Sigmoid colon (tissue), 7 donors: ENCODE measurements at regions of chr17 and their contacts with region 1.

Region 1: DNA sequence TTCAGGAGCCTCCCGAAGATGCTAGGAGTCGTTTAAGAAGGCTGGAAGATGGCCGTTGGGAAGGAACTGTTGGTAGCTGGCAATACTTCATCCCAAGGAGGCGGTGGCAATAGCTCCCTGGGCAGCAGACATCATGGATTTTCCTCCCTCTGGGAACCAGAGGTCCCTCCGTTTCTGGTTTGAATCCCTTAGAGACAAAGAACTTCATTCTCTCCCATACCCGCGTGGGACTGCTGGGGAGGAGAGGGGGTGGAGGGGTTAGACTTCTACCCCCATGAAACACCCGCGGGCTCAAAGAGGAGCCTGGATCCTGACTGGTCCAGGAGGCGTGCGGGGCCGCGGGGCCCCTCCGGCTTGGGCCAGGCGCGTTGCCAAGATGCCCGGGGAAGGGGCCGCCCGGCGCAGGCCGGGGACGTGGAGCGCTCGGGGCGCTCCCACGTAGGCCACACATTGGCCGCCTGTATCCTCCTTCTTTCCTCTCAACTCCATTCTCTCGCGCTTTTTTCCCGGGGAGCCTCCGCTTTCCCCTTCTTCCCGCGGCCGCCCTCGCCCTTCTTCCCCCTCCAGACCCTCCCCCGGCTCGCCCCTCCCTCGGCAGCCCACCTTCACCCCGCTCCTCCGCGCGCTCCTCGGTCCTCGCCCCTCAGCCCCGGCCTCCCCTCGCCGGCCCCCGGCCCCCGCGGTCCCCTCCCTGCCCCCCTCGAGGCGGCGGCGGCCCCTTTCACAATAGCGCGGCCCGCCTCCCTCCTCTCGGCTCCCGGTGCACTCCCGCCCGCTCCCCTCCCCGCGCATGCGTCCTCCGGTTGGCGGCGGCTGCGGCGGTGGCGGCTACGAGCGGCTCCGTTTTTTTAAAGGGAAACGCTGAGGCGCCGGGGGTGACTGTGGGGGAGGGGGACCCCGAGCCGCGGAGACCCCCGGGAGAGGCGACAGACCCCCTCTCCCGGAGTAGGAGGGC is at the start of gene MSL1:
- DNase-seq: peak; percentile 95
- H3K4me3 ChIP-seq: peak within 1 kb of the TSS; percentile 86 to 99 (median 95)
- H3K27ac ChIP-seq: peak within 1 kb of the TSS; percentile 98 to 100 (median 99)
- H3K4me1 ChIP-seq: peaks cover 0 to 36% (median 32%) of the 10 kb centered on the region in 4 donors
- H3K27me3 ChIP-seq: no peaks in the 10 kb centered on the region
- CTCF ChIP-seq: no peak
- EP300 ChIP-seq: peak in 1 of 4 donors; percentile 39
- POLR2A ChIP-seq: peak; percentile 47 to 64
- total RNA-seq, gene MSL1: 52.3 to 92.2 (median 58.0) TPM

Region 2: GRCh38 chr17:40139566-40140058 is 18.2 kb after region 1 on chr17:
- intact Hi-C with region 1: loop called (anchors 2 kb)
- DNase-seq: no peak
- H3K4me3 ChIP-seq: peak overlapping the region; percentile 43 to 87 (median 78)
- H3K27ac ChIP-seq: peak overlapping the region; percentile 93 to 99 (median 98)
- H3K4me1 ChIP-seq: peaks cover 0 to 28% (median 21%) of the 10 kb centered on the region in 4 donors
- H3K27me3 ChIP-seq: no peaks in the 10 kb centered on the region
- CTCF ChIP-seq: peak in 1 of 4 experiments; percentile 7
- EP300 ChIP-seq: no peak
- POLR2A ChIP-seq: no peak

Region 3: DNA sequence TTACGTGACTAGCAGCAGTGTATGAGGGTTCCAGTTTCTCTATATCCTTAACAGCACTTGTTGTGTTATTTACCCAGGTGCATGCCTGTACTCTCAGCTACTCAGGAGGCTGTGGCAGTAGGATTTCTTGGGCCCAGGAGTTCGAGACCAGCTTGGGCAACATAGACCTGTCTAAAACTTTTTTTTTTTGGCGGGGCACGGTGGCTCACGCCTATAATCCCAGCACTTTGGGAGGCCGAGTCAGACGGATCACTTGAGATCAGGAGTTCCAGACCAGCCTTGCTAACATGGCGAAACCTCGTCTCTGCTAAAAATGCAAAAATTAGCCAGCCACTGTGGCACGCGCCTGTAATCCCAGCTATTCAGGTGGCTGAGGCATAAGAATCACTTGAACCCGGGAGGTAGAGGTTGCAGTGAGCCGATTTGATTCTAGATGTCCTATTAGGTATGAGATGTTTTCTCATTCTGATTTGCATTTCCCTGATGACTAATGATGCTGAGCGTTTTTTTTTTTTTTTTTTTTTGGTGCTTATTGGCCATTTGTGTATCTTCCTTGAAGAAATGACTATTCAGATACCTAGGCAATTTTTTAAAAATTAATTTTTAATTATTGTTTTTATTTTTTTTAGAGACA is 32.3 kb after region 1 on chr17:
- intact Hi-C with region 1: no loop called
- DNase-seq: no peak
- H3K4me3 ChIP-seq: no peak overlapping the region
- H3K27ac ChIP-seq: peak overlapping the region in 2 of 4 donors; percentile 19 to 29
- H3K4me1 ChIP-seq: peaks cover 0 to 12% (median 7%) of the 10 kb centered on the region in 4 donors
- H3K27me3 ChIP-seq: no peaks in the 10 kb centered on the region
- CTCF ChIP-seq: no peak
- EP300 ChIP-seq: no peak
- POLR2A ChIP-seq: no peak